AG04449 (cell line): ENCODE measurements at regions of chr16 and their contacts with region 1.

Region 1: DNA sequence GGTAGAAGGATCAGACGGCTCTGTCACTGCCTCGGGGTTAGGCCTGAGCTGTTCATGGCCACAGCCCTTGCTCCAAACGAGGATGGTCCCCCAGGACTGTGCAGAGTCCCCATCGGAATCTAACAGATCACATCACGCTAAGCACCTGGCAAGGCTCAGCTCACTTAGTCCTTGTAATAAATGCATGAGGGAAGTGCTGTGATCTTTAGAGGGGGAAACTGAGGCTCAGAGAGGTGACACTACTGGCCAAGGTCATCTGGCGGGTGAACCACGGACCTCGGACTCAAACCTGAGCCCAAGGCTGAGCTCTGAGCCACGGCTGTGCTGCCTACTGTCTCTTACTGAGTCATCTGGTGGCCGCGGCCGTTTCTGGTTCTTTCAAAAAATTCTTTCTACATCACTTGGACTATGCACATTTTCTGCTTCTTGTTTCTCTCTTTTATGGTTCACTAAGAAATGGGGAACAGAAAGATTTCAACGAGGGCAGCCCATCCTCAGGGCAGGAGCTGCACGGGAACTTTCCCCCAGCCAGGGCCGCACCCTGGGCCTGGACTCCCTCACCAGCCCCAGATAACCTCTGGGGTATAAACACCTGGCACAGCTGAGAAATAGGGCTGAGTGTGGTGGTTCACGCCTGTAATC is 55.6 kb downstream of the COTL1 start:
- DNase-seq: no peak
- H3K4me3 ChIP-seq: no peak overlapping the region
- CTCF ChIP-seq: no peak

Region 2: DNA sequence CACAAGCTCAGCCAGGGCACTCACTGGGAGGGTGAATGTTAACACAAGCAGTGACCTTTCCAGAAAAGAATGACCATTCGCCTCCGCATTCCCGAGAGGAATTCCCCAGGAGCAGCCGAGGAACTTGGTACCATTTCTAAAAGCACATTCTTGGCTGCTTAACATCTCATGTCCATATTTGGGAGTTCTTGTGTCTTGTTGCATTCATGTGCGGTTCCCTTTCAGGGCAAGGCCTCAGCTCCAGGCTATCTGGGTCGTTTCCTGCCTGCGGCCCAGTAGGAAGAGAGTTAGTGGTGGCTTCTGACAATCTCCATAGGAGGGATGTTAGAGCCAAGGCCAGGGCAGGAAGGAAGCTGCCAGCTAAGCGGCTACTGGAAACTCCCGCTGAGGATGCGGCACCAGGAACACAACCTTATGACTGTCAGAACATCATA is 30.0 kb before region 1 on chr16:
- CTCF ChIA-PET with region 1: no interaction called
- POLR2A ChIA-PET with region 1: no interaction called
- DNase-seq: peak; percentile 92
- H3K4me3 ChIP-seq: no peak overlapping the region
- CTCF ChIP-seq: no peak

Region 3: DNA sequence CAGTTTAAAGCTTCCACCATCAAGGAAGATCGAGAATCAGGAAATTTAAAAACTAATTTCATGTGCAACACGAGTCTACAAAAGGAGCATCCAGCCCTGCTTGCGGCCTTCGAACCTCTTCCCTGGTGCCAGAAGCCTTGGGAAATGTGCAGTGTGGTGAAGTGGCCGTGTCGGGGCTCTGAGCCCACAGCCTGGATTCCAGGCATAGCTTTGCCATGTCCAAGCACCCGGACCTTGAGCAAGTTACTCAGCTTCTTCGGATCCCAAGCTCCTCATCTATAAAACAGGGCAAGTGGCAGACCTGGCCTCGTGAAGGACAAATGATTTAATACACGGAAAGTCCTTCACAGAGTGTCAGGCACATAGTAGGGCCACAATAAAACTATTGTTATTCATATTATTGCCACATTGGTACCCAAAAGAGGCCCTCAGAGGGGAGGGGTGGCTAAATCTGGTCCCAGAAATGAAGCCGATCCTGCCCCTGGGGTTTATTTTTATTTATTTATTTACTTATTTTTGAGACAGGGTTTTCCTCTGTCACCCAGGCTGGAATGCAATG is 20.7 kb after region 1 on chr16:
- CTCF ChIA-PET with region 1: interaction called, 10 read pairs
- POLR2A ChIA-PET with region 1: no interaction called
- DNase-seq: peak; percentile 60
- H3K4me3 ChIP-seq: no peak overlapping the region
- CTCF ChIP-seq: no peak

Region 4: GRCh38 chr16:86319585-86320270 is 1757.4 kb after region 1 on chr16:
- CTCF ChIA-PET with region 1: no interaction called
- POLR2A ChIA-PET with region 1: no interaction called
- DNase-seq: no peak
- H3K4me3 ChIP-seq: no peak overlapping the region
- CTCF ChIP-seq: no peak